HCT116 (cell line): ENCODE measurements at regions of chr7 and their contacts with region 1.

Region 1: DNA sequence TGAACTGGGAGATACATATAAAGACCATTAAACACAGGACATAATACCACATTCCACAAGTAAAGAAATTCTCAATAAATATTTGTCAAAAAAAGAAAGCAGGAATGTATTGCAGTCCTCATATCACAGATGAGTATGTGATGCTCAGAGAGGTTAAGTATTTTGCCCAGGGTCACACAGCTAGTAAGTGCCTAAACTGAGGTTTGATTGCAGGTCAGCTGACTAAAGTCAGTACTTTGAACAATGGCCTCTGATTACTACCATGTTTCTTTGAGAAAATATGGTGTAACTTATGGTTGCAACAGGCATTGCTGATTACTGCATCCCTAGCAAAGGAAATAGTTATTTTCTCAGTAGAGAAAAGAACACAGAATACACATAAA is 267.1 kb downstream of the ELMO1 start:
- DNase-seq: no peak
- ATAC-seq: no peak
- H3K4me3 ChIP-seq: no peak overlapping the region
- H3K27ac ChIP-seq: no peak overlapping the region
- H3K4me1 ChIP-seq: peaks cover 0 to 3% of the 10 kb centered on the region in 2 experiments; a peak in 2 of 4 replicates
- H3K27me3 ChIP-seq: no peaks in the 10 kb centered on the region
- CTCF ChIP-seq: no peak
- POLR2A ChIP-seq: no peak
- RAD21 ChIP-seq: no peak

Region 2: DNA sequence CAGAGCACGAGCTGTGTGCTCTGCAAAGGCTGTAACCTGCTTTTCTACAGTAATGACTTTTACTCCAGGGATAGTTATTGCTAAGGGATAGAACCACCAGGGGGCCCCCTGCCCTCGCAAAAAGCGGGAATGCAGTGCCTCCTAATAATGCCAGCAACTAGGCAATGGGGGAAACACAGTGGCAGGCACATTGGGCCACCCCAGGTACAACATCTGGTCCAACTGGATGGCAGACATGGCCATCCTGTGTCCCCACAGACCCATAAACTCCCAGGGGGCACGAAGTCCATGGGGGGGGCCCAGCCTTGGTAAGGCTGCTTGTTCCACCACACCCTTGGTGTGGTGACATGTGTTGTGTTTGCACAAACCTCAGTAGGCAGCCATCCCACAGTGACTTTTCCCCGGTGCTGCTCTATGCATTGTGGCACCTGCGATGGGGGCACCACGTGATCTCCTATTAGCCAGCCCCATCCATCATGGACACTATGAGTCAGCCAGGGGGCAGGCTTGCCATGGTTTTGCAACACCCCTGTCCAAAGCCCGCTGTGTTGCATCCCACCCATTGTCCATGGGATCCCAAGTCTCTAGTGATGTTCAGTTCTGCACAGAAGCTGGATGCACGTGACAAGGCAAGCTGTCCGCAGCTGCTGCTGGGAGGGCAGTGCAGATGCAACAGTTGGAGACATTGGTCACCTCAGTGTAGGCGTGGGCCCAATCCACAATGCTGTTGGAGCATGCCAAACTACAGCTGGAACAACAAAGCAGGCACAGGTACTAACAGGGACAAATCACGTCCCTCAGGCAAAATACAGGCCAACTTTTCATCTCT is 707.9 kb before region 1 on chr7:
- CTCF ChIA-PET with region 1: interaction called, 13 read pairs
- POLR2A ChIA-PET with region 1: no interaction called
- RAD21 ChIA-PET with region 1: interaction called in 1 of 2 experiments, 7 read pairs
- intact Hi-C with region 1: loop called (anchors 1 kb)
- DNase-seq: peak; percentile 31
- ATAC-seq: peak; percentile 94
- H3K4me3 ChIP-seq: no peak overlapping the region
- H3K27ac ChIP-seq: no peak overlapping the region
- H3K4me1 ChIP-seq: no peaks in the 10 kb centered on the region
- H3K27me3 ChIP-seq: no peaks in the 10 kb centered on the region
- CTCF ChIP-seq: peak; percentile 67 to 84 (median 76)
- POLR2A ChIP-seq: no peak
- RAD21 ChIP-seq: peak; percentile 91

Region 3: GRCh38 chr7:36670585-36671431 is 510.7 kb before region 1 on chr7:
- CTCF ChIA-PET with region 1: interaction called, 12 read pairs
- POLR2A ChIA-PET with region 1: no interaction called
- RAD21 ChIA-PET with region 1: interaction called, 3 to 5 read pairs
- intact Hi-C with region 1: loop called (anchors 5 kb)
- DNase-seq: peak; percentile 60
- ATAC-seq: peak; percentile 92
- H3K4me3 ChIP-seq: no peak overlapping the region
- H3K27ac ChIP-seq: no peak overlapping the region
- H3K4me1 ChIP-seq: peaks cover 5 to 21% of the 10 kb centered on the region in 2 experiments
- H3K27me3 ChIP-seq: no peaks in the 10 kb centered on the region
- CTCF ChIP-seq: peak; percentile 75 to 96 (median 91)
- POLR2A ChIP-seq: no peak
- RAD21 ChIP-seq: peak; percentile 84

Region 4: GRCh38 chr7:36967387-36967786 is 214.2 kb before region 1 on chr7:
- CTCF ChIA-PET with region 1: interaction called, 105 read pairs
- POLR2A ChIA-PET with region 1: no interaction called
- RAD21 ChIA-PET with region 1: interaction called, 22 to 31 read pairs
- intact Hi-C with region 1: loop called (anchors 1 kb)
- DNase-seq: peak; percentile 78
- ATAC-seq: peak; percentile 98
- H3K4me3 ChIP-seq: no peak overlapping the region
- H3K27ac ChIP-seq: no peak overlapping the region
- H3K4me1 ChIP-seq: peaks cover 0 to 6% of the 10 kb centered on the region in 2 experiments; a peak in 1 of 4 replicates
- H3K27me3 ChIP-seq: no peaks in the 10 kb centered on the region
- CTCF ChIP-seq: peak; percentile 72 to 86 (median 74); a peak in 5 of 6 replicates
- POLR2A ChIP-seq: no peak
- RAD21 ChIP-seq: peak; percentile 82

Region 5: GRCh38 chr7:37027557-37028341 is 153.8 kb before region 1 on chr7:
- CTCF ChIA-PET with region 1: interaction called, 52 read pairs
- POLR2A ChIA-PET with region 1: no interaction called
- RAD21 ChIA-PET with region 1: interaction called, 8 to 13 read pairs
- intact Hi-C with region 1: loop called (anchors 1 kb)
- DNase-seq: peak; percentile 6
- ATAC-seq: no peak
- H3K4me3 ChIP-seq: no peak overlapping the region
- H3K27ac ChIP-seq: no peak overlapping the region
- H3K4me1 ChIP-seq: peaks cover 31 to 43% of the 10 kb centered on the region in 2 experiments
- H3K27me3 ChIP-seq: no peaks in the 10 kb centered on the region
- CTCF ChIP-seq: peak in 1 of 3 experiments; percentile 21; a peak in 1 of 6 replicates
- POLR2A ChIP-seq: no peak
- RAD21 ChIP-seq: peak; percentile 59